ENCODE measurements at regions of chr4 and their contacts with region 1.

Region 1: GRCh38 chr4:74932816-74933561 is at the start of gene PARM1:
- DNase-seq: peak in 1 of 2 donors; percentile 92
- H3K4me3 ChIP-seq: peak within 1 kb of the TSS; percentile 55 to 71
- H3K27ac ChIP-seq: peak within 1 kb of the TSS; percentile 76
- H3K4me1 ChIP-seq: peaks cover 5% of the 10 kb centered on the region
- H3K27me3 ChIP-seq: no peaks in the 10 kb centered on the region
- CTCF ChIP-seq: peak; percentile 53 to 67 (median 55)
- POLR2A ChIP-seq: peak in 1 of 2 donors; percentile 39
- total RNA-seq, gene PARM1: 26.3 TPM

Region 2: GRCh38 chr4:75327804-75328512 is 395.0 kb after region 1 on chr4:
- intact Hi-C with region 1: loop called (anchors 10 kb)
- DNase-seq: no peak
- H3K4me3 ChIP-seq: no peak overlapping the region
- H3K27ac ChIP-seq: peak overlapping the region; percentile 46
- H3K4me1 ChIP-seq: no peaks in the 10 kb centered on the region
- H3K27me3 ChIP-seq: no peaks in the 10 kb centered on the region
- CTCF ChIP-seq: peak in 1 of 3 experiments; percentile 17
- POLR2A ChIP-seq: no peak

Region 3: DNA sequence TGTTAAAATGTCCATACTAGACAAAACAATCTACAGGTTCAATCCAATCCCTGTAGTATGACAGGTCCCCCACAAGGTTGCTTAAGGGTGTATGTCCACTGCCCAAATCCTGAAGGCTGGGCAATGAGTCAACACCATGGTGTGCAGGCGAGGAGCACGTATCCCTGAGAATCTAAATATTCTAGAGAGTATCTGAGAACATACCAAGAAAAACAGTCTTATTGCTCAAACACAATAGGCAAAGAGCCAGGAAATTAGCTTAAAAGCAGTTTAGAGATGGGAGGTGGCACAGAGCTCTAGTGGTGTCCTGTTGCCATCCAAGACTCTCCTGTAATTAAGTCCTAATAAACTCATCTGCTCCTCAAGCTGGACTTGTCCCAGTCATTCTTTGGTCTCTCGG is 544.2 kb after region 1 on chr4:
- intact Hi-C with region 1: loop called (anchors 10 kb)
- DNase-seq: no peak
- H3K4me3 ChIP-seq: no peak overlapping the region
- H3K27ac ChIP-seq: no peak overlapping the region
- H3K4me1 ChIP-seq: no peaks in the 10 kb centered on the region
- H3K27me3 ChIP-seq: no peaks in the 10 kb centered on the region
- CTCF ChIP-seq: no peak
- POLR2A ChIP-seq: no peak

Measured in vagina (tissue), 2 donors.